ENCODE measurements at regions of chr2 and their contacts with region 1.

Region 1: DNA sequence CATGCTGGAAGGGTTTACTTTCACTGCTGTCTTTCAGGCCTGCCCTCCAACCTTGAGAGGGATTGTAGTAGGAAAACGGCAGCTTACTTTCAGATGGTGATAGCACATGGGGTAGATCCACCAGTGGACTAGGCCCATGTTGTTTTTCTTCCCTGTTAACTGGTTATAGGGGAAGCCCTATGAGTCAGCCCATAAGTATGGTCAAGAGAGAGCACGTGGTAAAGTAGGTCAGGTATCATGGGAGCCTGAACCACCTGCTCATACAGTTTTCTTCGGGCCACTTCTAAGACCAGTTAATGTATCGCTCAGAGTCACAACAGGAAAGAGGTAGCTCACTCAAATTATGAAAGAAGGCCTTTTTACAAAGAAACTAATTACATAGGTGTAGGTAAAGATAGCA is 33.0 kb downstream of the PDK1 start:
- DNase-seq: no peak
- H3K4me3 ChIP-seq: no peak overlapping the region
- H3K27ac ChIP-seq: no peak overlapping the region
- H3K4me1 ChIP-seq: no peaks in the 10 kb centered on the region
- H3K27me3 ChIP-seq: no peaks in the 10 kb centered on the region
- CTCF ChIP-seq: no peak
- EP300 ChIP-seq: no peak
- POLR2A ChIP-seq: no peak

Region 2: GRCh38 chr2:172710584-172711024 is 121.7 kb after region 1 on chr2:
- intact Hi-C with region 1: loop called (anchors 1 kb)
- DNase-seq: no peak
- H3K4me3 ChIP-seq: no peak overlapping the region
- H3K27ac ChIP-seq: no peak overlapping the region
- H3K4me1 ChIP-seq: no peaks in the 10 kb centered on the region
- H3K27me3 ChIP-seq: no peaks in the 10 kb centered on the region
- CTCF ChIP-seq: peak in 3 of 4 experiments; percentile 64 to 68 (median 64)
- EP300 ChIP-seq: no peak
- POLR2A ChIP-seq: no peak